ENCODE measurements at regions of chr17 and their contacts with region 1.

Region 1: GRCh38 chr17:5391678-5392077 is 27.8 kb downstream of the NUP88 start:
- DNase-seq: no peak
- ATAC-seq: no peak
- H3K4me3 Mint-ChIP-seq: no peak overlapping the region
- H3K27ac Mint-ChIP-seq: no peak overlapping the region
- H3K4me1 Mint-ChIP-seq: peaks cover 8% of the 10 kb centered on the region
- H3K27me3 Mint-ChIP-seq: no peaks in the 10 kb centered on the region

Region 2: GRCh38 chr17:5281814-5282653 is 109.6 kb before region 1 on chr17 and contains the start of gene RABEP1:
- CTCF ChIA-PET with region 1: no interaction called
- POLR2A ChIA-PET with region 1: no interaction called
- DNase-seq: peak; percentile 94
- ATAC-seq: peak; percentile 84
- H3K4me3 Mint-ChIP-seq: peak within 1 kb of the TSS; percentile 87
- H3K27ac Mint-ChIP-seq: peak within 1 kb of the TSS; percentile 87
- H3K4me1 Mint-ChIP-seq: peaks cover 24% of the 10 kb centered on the region
- H3K27me3 Mint-ChIP-seq: no peaks in the 10 kb centered on the region
- total RNA-seq, gene RABEP1: 37.5 to 37.8 TPM

Region 3: GRCh38 chr17:5364156-5364555 is 27.5 kb before region 1 on chr17:
- CTCF ChIA-PET with region 1: no interaction called
- POLR2A ChIA-PET with region 1: no interaction called
- DNase-seq: no peak
- ATAC-seq: no peak
- H3K4me3 Mint-ChIP-seq: no peak overlapping the region
- H3K27ac Mint-ChIP-seq: no peak overlapping the region
- H3K4me1 Mint-ChIP-seq: no peaks in the 10 kb centered on the region
- H3K27me3 Mint-ChIP-seq: no peaks in the 10 kb centered on the region

Region 4: GRCh38 chr17:5381542-5381941 is 10.1 kb before region 1 on chr17:
- CTCF ChIA-PET with region 1: interaction called, 12 read pairs
- POLR2A ChIA-PET with region 1: no interaction called
- DNase-seq: no peak
- ATAC-seq: no peak
- H3K4me3 Mint-ChIP-seq: no peak overlapping the region
- H3K27ac Mint-ChIP-seq: no peak overlapping the region
- H3K4me1 Mint-ChIP-seq: no peaks in the 10 kb centered on the region
- H3K27me3 Mint-ChIP-seq: no peaks in the 10 kb centered on the region

Region 5: GRCh38 chr17:5419356-5419958 is 27.8 kb after region 1 on chr17 and contains the start of gene NUP88:
- CTCF ChIA-PET with region 1: no interaction called
- POLR2A ChIA-PET with region 1: interaction called, 13 read pairs
- DNase-seq: peak; percentile 98
- ATAC-seq: peak; percentile 97
- H3K4me3 Mint-ChIP-seq: peak within 1 kb of the TSS; percentile 100
- H3K27ac Mint-ChIP-seq: peak within 1 kb of the TSS; percentile 99
- H3K4me1 Mint-ChIP-seq: peaks cover 47% of the 10 kb centered on the region
- H3K27me3 Mint-ChIP-seq: no peaks in the 10 kb centered on the region
- total RNA-seq, gene NUP88: 97.2 to 105 TPM

Region 6: GRCh38 chr17:5464717-5465507 is 73.2 kb after region 1 on chr17:
- CTCF ChIA-PET with region 1: no interaction called
- POLR2A ChIA-PET with region 1: no interaction called
- DNase-seq: no peak
- ATAC-seq: no peak
- H3K4me3 Mint-ChIP-seq: no peak overlapping the region
- H3K27ac Mint-ChIP-seq: no peak overlapping the region
- H3K4me1 Mint-ChIP-seq: peaks cover 36% of the 10 kb centered on the region
- H3K27me3 Mint-ChIP-seq: no peaks in the 10 kb centered on the region

Measured in activated CD8-positive, alpha-beta T cell treated with anti-CD3 and anti-CD28 coated beads, Interleukin-2, amount 10 ng/mL, durations not matched to agents 7 days and 5 days (primary cell).